HepG2 (cell line): ENCODE measurements at regions of chr6 and their contacts with region 1.

Region 1: GRCh38 chr6:102853269-102853955 is 1459.9 kb downstream of the GRIK2 start:
- DNase-seq: no peak
- ATAC-seq: no peak
- H3K4me3 ChIP-seq: no peak overlapping the region
- H3K27ac ChIP-seq: no peak overlapping the region
- H3K4me1 ChIP-seq: no peaks in the 10 kb centered on the region
- H3K27me3 ChIP-seq: no peaks in the 10 kb centered on the region
- CTCF ChIP-seq: no peak
- EP300 ChIP-seq: no peak
- POLR2A ChIP-seq: no peak
- RAD21 ChIP-seq: no peak

Region 2: GRCh38 chr6:103273048-103273447 is 419.6 kb after region 1 on chr6:
- CTCF ChIA-PET with region 1: no interaction called
- POLR2A ChIA-PET with region 1: no interaction called
- in situ Hi-C with region 1: no loop called
- intact Hi-C with region 1: loop called (anchors 1 kb)
- DNase-seq: peak; percentile 5
- ATAC-seq: peak; percentile 80
- H3K4me3 ChIP-seq: no peak overlapping the region
- H3K27ac ChIP-seq: no peak overlapping the region
- H3K4me1 ChIP-seq: no peaks in the 10 kb centered on the region
- H3K27me3 ChIP-seq: no peaks in the 10 kb centered on the region
- CTCF ChIP-seq: peak; percentile 56
- EP300 ChIP-seq: no peak
- POLR2A ChIP-seq: no peak
- RAD21 ChIP-seq: no peak